ENCODE measurements at regions of chr10 and their contacts with region 1.

Region 1: GRCh38 chr10:119178372-119179119 is at the start of gene PRDX3:
- DNase-seq: peak; percentile 98
- ATAC-seq: peak; percentile 95
- H3K4me3 Mint-ChIP-seq: peak within 1 kb of the TSS; percentile 88
- H3K27ac Mint-ChIP-seq: peak within 1 kb of the TSS; percentile 95
- H3K4me1 Mint-ChIP-seq: peaks cover 36% of the 10 kb centered on the region
- H3K27me3 Mint-ChIP-seq: no peaks in the 10 kb centered on the region
- total RNA-seq, gene PRDX3: 160 to 217 TPM

Region 2: GRCh38 chr10:118308664-118309063 is 869.9 kb before region 1 on chr10:
- CTCF ChIA-PET with region 1: no interaction called
- POLR2A ChIA-PET with region 1: no interaction called
- intact Hi-C with region 1: no loop called
- DNase-seq: no peak
- ATAC-seq: no peak
- H3K4me3 Mint-ChIP-seq: no peak overlapping the region
- H3K27ac Mint-ChIP-seq: no peak overlapping the region
- H3K4me1 Mint-ChIP-seq: no peaks in the 10 kb centered on the region
- H3K27me3 Mint-ChIP-seq: no peaks in the 10 kb centered on the region

Region 3: GRCh38 chr10:119165171-119166110 is 13.1 kb before region 1 on chr10 and contains the start of gene SFXN4:
- CTCF ChIA-PET with region 1: interaction called, 6 read pairs
- POLR2A ChIA-PET with region 1: interaction called, 4 read pairs
- intact Hi-C with region 1: loop called (anchors 1 kb)
- DNase-seq: peak; percentile 87
- ATAC-seq: peak; percentile 94
- H3K4me3 Mint-ChIP-seq: peak within 1 kb of the TSS; percentile 86
- H3K27ac Mint-ChIP-seq: peak within 1 kb of the TSS; percentile 94
- H3K4me1 Mint-ChIP-seq: peaks cover 40% of the 10 kb centered on the region
- H3K27me3 Mint-ChIP-seq: no peaks in the 10 kb centered on the region
- total RNA-seq, gene SFXN4: 38.7 to 44.7 TPM

Measured in activated CD4-positive, alpha-beta T cell treated with anti-CD3 and anti-CD28 coated beads for 36 hours (primary cell).